ENCODE measurements at regions of chr20 and their contacts with region 1.

Region 1: GRCh38 chr20:47063409-47064207 is 169.0 kb downstream of the EYA2 start:
- DNase-seq: no peak
- ATAC-seq: no peak
- H3K4me3 ChIP-seq: no peak overlapping the region
- H3K27ac ChIP-seq: no peak overlapping the region
- H3K4me1 ChIP-seq: no peaks in the 10 kb centered on the region
- H3K27me3 ChIP-seq: no peaks in the 10 kb centered on the region
- CTCF ChIP-seq: no peak
- EP300 ChIP-seq: no peak
- POLR2A ChIP-seq: no peak
- RAD21 ChIP-seq: no peak

Region 2: DNA sequence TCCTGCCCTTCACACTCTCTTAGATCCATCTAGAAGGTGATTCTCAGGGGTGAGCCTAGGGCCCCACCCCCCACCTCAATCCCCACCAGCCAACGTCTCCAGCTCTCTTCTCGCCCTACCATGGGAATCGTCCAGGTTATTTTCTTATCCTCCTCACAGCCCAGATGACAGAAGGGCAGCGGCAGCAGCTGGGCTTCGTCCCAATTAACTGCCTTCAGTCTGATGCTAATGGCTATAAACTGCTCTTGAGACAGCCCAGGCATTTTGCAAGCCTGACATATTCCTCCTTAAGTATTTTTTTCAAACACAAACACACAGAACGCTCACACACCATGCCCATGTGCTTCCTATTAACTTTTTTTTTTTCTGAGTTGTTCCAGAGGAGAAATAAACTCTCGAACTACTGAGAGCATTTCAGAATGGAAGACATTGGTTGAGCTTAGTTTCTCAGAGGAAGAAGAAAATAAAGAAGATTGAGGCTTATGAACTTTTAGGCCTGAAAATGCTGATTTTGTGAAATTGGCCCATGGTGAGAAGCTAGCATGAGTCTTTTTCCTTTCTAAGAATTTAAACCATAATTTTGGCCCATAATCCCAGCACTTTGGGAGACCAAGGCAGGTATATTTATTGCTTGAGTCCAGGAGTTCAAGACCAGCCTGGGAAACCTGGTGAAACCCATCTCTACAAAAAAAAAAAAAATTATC is 44.3 kb before region 1 on chr20:
- CTCF ChIA-PET with region 1: no interaction called
- POLR2A ChIA-PET with region 1: interaction called, 3 read pairs
- RAD21 ChIA-PET with region 1: no interaction called
- SMC1A ChIA-PET with region 1: no interaction called
- in situ Hi-C with region 1: no loop called
- intact Hi-C with region 1: loop called (anchors 10 kb)
- DNase-seq: no peak
- ATAC-seq: no peak
- H3K4me3 ChIP-seq: no peak overlapping the region
- H3K27ac ChIP-seq: no peak overlapping the region
- H3K4me1 ChIP-seq: no peaks in the 10 kb centered on the region
- H3K27me3 ChIP-seq: peaks cover 0 to 5% of the 10 kb centered on the region in 2 experiments; a peak in 3 of 4 replicates
- CTCF ChIP-seq: no peak
- EP300 ChIP-seq: no peak
- POLR2A ChIP-seq: no peak
- RAD21 ChIP-seq: no peak

Region 3: DNA sequence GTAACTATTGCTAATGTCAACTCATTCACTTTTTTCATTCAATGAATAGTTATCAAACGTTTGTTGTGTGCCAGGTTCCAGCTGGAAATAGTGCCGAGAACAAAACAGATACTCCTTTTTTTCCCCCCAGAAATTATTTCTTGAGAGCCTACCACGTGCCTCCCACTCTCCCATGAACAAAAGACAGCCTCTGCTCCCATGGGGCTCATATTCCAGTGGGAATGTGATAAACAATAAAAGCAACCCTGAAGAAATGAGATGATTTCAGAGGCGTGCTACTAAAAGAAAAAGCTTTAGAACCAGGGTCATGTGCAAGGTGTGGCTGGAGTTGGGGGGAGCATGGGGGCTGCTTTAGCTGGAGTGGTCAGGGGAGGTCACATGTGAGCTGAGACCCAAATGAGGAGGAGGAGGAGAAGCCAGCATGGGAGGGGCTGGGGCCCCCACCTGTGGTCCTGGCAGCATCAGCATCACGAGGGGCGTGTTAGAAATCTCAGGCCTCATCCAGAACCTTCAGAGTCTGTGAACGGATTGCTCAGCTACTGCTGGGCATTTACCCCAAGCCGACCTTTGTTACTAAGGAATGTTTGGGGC is 11.6 kb before region 1 on chr20:
- CTCF ChIA-PET with region 1: no interaction called
- POLR2A ChIA-PET with region 1: no interaction called
- RAD21 ChIA-PET with region 1: no interaction called
- SMC1A ChIA-PET with region 1: no interaction called
- in situ Hi-C with region 1: no loop called
- intact Hi-C with region 1: no loop called
- DNase-seq: no peak
- ATAC-seq: no peak
- H3K4me3 ChIP-seq: no peak overlapping the region
- H3K27ac ChIP-seq: no peak overlapping the region
- H3K4me1 ChIP-seq: no peaks in the 10 kb centered on the region
- H3K27me3 ChIP-seq: peaks cover 0 to 1% of the 10 kb centered on the region in 2 experiments; a peak in 2 of 4 replicates
- CTCF ChIP-seq: no peak
- EP300 ChIP-seq: no peak
- POLR2A ChIP-seq: no peak
- RAD21 ChIP-seq: no peak

Region 4: GRCh38 chr20:47113362-47114109 is 49.9 kb after region 1 on chr20:
- CTCF ChIA-PET with region 1: no interaction called
- POLR2A ChIA-PET with region 1: no interaction called
- RAD21 ChIA-PET with region 1: no interaction called
- SMC1A ChIA-PET with region 1: no interaction called
- in situ Hi-C with region 1: loop called (anchors 5 kb)
- intact Hi-C with region 1: no loop called
- DNase-seq: no peak
- ATAC-seq: no peak
- H3K4me3 ChIP-seq: no peak overlapping the region
- H3K27ac ChIP-seq: no peak overlapping the region
- H3K4me1 ChIP-seq: no peaks in the 10 kb centered on the region
- H3K27me3 ChIP-seq: peaks cover 0 to 5% of the 10 kb centered on the region in 2 experiments; a peak in 2 of 4 replicates
- CTCF ChIP-seq: no peak
- EP300 ChIP-seq: no peak
- POLR2A ChIP-seq: no peak
- RAD21 ChIP-seq: no peak